ENCODE measurements at regions of chr4 and their contacts with region 1.

Region 1: DNA sequence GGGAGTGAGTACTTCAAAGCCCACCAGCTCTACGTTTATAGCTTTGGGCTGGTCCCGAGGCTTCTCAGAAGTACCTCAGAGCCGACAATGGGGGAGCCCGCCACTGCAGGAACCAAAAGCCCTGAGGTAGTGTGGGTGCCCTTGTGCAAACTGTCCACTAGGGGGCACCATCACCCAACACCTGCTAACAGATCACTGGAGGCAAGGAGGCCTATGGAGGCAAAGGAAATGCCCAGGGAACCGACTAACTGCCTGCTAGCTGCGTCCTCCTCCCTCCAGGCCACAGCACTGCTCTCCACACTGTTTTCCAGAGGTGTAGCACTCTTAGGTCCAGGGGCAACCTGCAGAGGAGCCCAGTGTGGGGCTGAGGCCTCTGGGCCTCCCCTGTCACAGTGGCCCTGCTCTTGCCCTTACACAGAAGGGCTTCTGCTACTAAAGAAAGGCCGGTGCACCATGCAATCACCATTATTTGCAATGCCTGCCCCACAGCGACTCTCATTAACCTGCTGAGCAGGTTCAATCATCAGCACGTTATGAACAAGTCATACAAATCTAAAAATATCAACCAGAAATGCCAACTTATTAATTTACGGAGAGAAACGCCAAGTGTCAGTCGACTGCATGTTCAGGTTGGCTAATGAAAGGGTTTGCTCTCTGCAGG is 159.1 kb downstream of the NSUN7 start:
- DNase-seq: peak; percentile 59
- H3K4me3 Mint-ChIP-seq: no peak overlapping the region
- H3K27ac Mint-ChIP-seq: peak overlapping the region; percentile 85
- H3K4me1 Mint-ChIP-seq: peaks cover 21% of the 10 kb centered on the region
- H3K27me3 Mint-ChIP-seq: no peaks in the 10 kb centered on the region

Region 2: GRCh38 chr4:40587823-40588222 is 321.0 kb before region 1 on chr4:
- intact Hi-C with region 1: no loop called
- DNase-seq: no peak
- H3K4me3 Mint-ChIP-seq: no peak overlapping the region
- H3K27ac Mint-ChIP-seq: no peak overlapping the region
- H3K4me1 Mint-ChIP-seq: peaks cover 40% of the 10 kb centered on the region
- H3K27me3 Mint-ChIP-seq: peaks cover under 1% of the 10 kb centered on the region

Region 3: GRCh38 chr4:40887288-40888131 is 21.3 kb before region 1 on chr4:
- intact Hi-C with region 1: no loop called
- DNase-seq: no peak
- H3K4me3 Mint-ChIP-seq: no peak overlapping the region
- H3K27ac Mint-ChIP-seq: no peak overlapping the region
- H3K4me1 Mint-ChIP-seq: peaks cover 16% of the 10 kb centered on the region
- H3K27me3 Mint-ChIP-seq: peaks cover 23% of the 10 kb centered on the region

Region 4: GRCh38 chr4:40924096-40924792 is 15.4 kb after region 1 on chr4:
- intact Hi-C with region 1: loop called (anchors 1 kb)
- DNase-seq: peak; percentile 58
- H3K4me3 Mint-ChIP-seq: no peak overlapping the region
- H3K27ac Mint-ChIP-seq: peak overlapping the region; percentile 80
- H3K4me1 Mint-ChIP-seq: peaks cover 13% of the 10 kb centered on the region
- H3K27me3 Mint-ChIP-seq: peaks cover 15% of the 10 kb centered on the region

Region 5: DNA sequence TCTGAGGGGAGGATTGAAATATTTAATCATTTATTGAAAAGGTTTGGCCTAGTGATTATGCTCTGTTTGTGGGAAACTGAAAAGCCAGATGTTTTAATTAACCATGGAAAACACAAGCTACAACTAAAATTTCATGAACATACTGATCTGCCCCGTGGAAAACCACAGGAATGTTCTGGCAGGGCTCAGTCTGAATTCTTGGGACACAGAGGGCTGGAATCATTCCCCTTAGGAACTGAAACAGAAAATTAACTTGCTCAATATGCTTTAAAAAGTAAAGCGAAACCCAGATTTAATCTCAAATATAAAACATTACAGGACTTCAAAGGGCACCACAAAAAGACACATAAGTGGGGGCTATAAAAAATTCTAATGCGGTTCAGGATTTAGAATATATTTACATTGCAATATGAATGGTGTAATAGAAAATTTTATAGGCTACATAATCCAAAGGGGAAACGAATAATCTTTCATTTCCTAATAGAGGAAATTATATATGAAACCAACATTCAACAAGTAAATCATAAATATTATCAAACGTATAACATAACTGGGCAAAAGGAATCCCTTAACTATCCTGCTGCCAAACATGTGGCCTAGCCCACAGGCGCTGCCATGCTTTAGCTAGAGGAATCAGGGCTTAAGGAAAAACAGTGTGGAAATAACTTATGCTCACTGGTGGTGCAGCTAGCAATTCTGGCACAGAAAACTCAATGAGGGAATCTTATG is 234.6 kb after region 1 on chr4:
- intact Hi-C with region 1: no loop called
- DNase-seq: no peak
- H3K4me3 Mint-ChIP-seq: no peak overlapping the region
- H3K27ac Mint-ChIP-seq: no peak overlapping the region
- H3K4me1 Mint-ChIP-seq: no peaks in the 10 kb centered on the region
- H3K27me3 Mint-ChIP-seq: peaks cover 3% of the 10 kb centered on the region

Region 6: DNA sequence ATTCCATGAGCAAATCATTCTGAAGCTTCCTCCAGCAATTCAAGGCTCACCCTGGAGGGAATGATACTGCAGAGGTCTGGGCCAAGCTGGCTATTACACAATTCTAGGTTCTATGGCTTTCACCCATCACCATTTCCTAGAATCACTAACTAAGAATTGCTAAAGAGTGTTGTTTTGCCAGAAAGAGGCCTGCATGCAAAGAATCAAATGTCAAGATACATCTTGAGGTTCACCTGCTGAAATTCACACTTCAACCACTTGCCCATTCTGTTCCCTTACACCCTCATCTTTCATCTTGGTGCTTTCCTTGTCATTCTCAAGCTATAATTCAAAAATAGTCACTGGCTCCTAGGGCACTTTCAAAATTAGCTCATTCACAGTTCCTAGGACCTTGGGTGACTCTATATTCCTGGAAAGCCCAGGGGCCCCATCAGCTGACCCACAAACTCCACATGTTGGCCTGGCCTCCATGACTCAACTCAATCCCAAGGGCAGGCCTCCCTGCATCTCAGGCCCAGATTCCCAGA is 298.5 kb after region 1 on chr4:
- intact Hi-C with region 1: loop called (anchors 1 kb)
- DNase-seq: no peak
- H3K4me3 Mint-ChIP-seq: no peak overlapping the region
- H3K27ac Mint-ChIP-seq: no peak overlapping the region
- H3K4me1 Mint-ChIP-seq: peaks cover 4% of the 10 kb centered on the region
- H3K27me3 Mint-ChIP-seq: peaks cover 26% of the 10 kb centered on the region

Region 7: DNA sequence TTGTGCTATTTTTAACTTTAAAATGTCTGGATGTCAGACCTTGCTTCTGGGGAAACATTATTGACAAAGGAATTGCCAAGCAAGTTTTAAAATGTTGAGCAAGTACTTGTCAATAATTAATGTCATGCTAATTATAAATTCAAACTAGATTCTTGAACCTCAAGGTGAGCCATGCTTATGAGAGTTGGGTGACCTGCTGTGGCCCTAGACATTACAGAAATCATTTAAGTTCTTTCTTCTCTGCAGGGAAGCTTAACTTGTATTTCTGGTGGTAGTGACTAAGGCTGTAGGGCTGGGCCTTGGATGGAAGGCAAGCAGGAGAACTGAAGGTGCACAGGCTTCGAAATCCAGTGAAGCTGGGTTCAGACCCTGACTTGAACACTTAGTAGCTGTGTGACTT is 333.1 kb after region 1 on chr4:
- intact Hi-C with region 1: no loop called
- DNase-seq: no peak
- H3K4me3 Mint-ChIP-seq: no peak overlapping the region
- H3K27ac Mint-ChIP-seq: no peak overlapping the region
- H3K4me1 Mint-ChIP-seq: no peaks in the 10 kb centered on the region
- H3K27me3 Mint-ChIP-seq: peaks cover 2% of the 10 kb centered on the region

Measured in activated T-helper 2 cell treated with anti-CD3 and anti-CD28 coated beads, Interferon-gamma antibody, Interleukin-2, Interleukin-4, amounts not matched to agents 10 μg/mL and 5 μg/mL and 100 μg/mL, durations not matched to agents 14 hours and 24 hours and 36 hours (primary cell).